ENCODE measurements at regions of chr15 and their contacts with region 1.

Region 1: GRCh38 chr15:52528991-52529926 is 579 bp upstream of the MYO5A start:
- DNase-seq: peak; percentile 84
- H3K4me3 ChIP-seq: peak overlapping the region; percentile 36 to 91 (median 78)
- H3K27ac ChIP-seq: peak overlapping the region; percentile 83 to 89 (median 88)
- H3K4me1 ChIP-seq: peaks cover 0 to 20% (median 9%) of the 10 kb centered on the region in 4 donors
- H3K27me3 ChIP-seq: no peaks in the 10 kb centered on the region
- CTCF ChIP-seq: no peak
- EP300 ChIP-seq: no peak
- POLR2A ChIP-seq: no peak

Region 2: DNA sequence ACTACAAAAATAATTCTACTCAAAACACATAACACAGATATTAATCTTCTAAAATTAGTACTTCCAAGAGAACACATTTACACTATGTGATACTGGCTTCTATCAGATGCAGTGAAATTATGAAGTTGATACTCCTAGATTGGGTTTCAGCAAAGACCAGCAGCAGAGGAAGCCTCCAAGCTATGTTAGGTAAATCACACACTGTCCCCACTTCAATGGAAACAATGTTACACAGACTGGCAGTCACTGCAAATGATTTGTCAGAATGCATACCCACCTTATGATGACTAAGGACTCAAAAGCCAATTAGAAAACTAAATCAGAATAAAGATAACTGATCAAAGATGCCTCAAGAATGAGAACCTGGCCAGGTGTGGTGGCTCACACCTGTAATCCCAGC is 143.6 kb before region 1 on chr15:
- intact Hi-C with region 1: loop called (anchors 5 kb)
- DNase-seq: no peak
- H3K4me3 ChIP-seq: no peak overlapping the region
- H3K27ac ChIP-seq: no peak overlapping the region
- H3K4me1 ChIP-seq: no peaks in the 10 kb centered on the region
- H3K27me3 ChIP-seq: no peaks in the 10 kb centered on the region
- CTCF ChIP-seq: no peak
- EP300 ChIP-seq: no peak
- POLR2A ChIP-seq: no peak